ENCODE measurements at regions of chr2 and their contacts with region 1.

Region 1: DNA sequence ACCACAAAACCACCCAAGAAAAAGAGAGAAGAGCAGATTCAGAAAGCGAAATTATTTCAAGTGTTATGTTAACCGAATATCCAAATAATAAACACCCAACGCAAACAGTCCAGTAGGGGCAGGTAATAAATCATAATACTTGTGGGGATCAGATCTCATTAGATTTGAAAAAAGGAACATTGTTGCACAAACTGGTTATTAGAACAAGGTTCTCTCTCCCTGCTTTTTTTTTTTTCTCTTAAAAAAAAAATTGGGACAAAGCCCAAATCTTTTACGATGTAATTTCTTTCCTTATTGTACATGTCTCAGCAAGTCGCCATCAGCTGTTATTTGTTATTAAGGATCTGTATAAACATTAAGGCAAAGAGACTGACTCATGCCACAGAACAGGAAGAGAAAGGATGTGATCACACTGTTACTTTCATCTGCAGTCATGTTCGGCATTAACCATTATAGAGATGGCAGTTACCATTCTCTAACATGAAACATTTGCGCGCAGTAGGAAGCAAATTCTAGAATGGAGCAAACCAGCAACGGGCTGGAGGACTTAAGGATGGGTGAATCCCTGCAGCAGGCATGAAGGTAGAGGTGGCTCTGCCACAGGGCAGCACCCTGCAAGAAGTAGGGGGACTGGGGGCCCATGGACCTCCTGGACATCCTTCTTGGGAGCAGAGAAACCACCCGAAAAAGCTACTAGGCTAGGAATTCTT is 42.0 kb downstream of the EPHA4 start:
- DNase-seq: peak in 4 of 5 donors; percentile 26 to 40 (median 36)
- H3K4me3 ChIP-seq: peak overlapping the region; percentile 9 to 38
- H3K4me3 Mint-ChIP-seq: peak overlapping the region; percentile 66 to 83 (median 78)
- H3K27ac ChIP-seq: peak overlapping the region; percentile 33
- H3K27ac Mint-ChIP-seq: peak overlapping the region; percentile 84 to 96 (median 91)
- H3K4me1 ChIP-seq: peaks cover 69% of the 10 kb centered on the region
- H3K4me1 Mint-ChIP-seq: peaks cover 54 to 76% (median 68%) of the 10 kb centered on the region in 4 donors
- H3K27me3 ChIP-seq: no peaks in the 10 kb centered on the region
- H3K27me3 Mint-ChIP-seq: no peaks in the 10 kb centered on the region

Region 2: GRCh38 chr2:221502270-221503010 is 27.7 kb before region 1 on chr2:
- CTCF ChIA-PET with region 1: interaction called, 10 read pairs
- POLR2A ChIA-PET with region 1: interaction called, 6 read pairs
- intact Hi-C with region 1: no loop called
- DNase-seq: no peak
- H3K4me3 ChIP-seq: no peak overlapping the region
- H3K4me3 Mint-ChIP-seq: peak overlapping the region in 1 of 8 donors; percentile 37
- H3K27ac ChIP-seq: no peak overlapping the region
- H3K27ac Mint-ChIP-seq: peak overlapping the region in 5 of 7 donors; percentile 1 to 39 (median 13)
- H3K4me1 ChIP-seq: peaks cover 22% of the 10 kb centered on the region
- H3K4me1 Mint-ChIP-seq: peaks cover 28 to 59% (median 45%) of the 10 kb centered on the region in 4 donors
- H3K27me3 ChIP-seq: no peaks in the 10 kb centered on the region
- H3K27me3 Mint-ChIP-seq: no peaks in the 10 kb centered on the region

Region 3: DNA sequence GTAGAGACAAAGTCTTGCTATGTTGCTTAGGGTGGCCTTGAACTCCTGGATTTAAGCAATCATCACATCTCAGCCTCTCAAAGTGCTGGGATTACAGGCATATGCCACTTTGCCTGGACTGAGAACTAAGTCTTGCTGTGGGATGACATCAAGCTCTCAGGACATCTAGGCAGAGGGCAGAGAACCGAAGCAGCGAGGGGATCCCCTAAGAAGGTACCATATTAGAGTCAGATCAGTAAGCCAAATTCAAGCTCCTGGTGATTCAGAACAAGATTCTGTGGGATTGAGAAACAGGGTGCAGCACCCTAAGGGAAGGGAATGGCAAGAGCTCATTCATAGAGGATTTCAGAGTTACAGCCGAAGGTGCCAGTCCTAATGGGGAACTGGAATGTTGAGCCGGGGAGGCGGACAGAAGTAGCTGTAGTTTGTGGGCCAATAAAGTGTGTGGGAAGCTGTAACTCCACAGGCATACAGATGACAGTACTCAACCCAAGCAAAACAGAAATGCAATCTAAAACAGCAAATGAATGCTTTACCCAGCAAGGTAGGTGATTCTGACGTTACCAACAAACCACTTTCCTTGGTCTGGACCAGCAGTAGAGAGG is 11.1 kb after region 1 on chr2:
- CTCF ChIA-PET with region 1: no interaction called
- POLR2A ChIA-PET with region 1: interaction called, 12 read pairs
- intact Hi-C with region 1: loop called (anchors 2 kb)
- DNase-seq: no peak
- H3K4me3 ChIP-seq: no peak overlapping the region
- H3K4me3 Mint-ChIP-seq: no peak overlapping the region
- H3K27ac ChIP-seq: no peak overlapping the region
- H3K27ac Mint-ChIP-seq: peak overlapping the region in 3 of 7 donors; percentile 44 to 82 (median 45)
- H3K4me1 ChIP-seq: no peaks in the 10 kb centered on the region
- H3K4me1 Mint-ChIP-seq: peaks cover 16 to 44% (median 36%) of the 10 kb centered on the region in 4 donors
- H3K27me3 ChIP-seq: no peaks in the 10 kb centered on the region
- H3K27me3 Mint-ChIP-seq: no peaks in the 10 kb centered on the region

Region 4: DNA sequence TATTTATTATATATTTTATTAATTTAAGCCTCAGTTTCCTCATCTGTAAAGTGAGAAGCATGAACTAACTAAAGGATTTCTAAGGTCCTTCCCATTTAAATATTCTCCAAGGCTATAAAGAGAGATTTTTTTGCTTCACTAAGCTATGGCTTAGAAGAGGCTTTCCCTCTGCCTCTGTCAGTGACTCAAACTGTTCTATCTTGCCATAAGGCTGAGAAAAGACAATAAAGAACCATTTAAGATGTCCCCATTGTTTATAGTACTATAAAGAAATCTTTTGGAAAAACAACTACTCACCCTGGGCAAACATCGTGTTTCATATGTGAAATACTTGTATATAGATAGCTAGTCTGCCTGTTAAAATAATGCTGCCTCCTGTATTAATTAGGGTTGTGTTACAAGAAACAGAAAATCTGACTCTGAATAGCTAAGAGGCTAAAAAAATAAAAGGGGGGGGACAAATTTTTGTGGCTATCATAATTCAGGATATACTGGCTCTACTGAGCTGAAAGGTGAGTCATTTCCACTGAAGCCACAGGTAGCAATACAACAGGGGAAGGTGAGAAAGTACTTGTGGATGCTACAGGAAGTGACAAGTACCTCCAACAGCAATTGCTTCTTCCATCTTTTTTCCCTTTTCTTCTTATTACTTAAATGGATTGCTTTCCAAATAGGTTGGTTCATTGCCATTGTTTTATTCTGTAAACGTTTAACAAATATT is 16.6 kb after region 1 on chr2:
- CTCF ChIA-PET with region 1: no interaction called
- POLR2A ChIA-PET with region 1: interaction called, 7 read pairs
- intact Hi-C with region 1: loop called (anchors 2 kb)
- DNase-seq: no peak
- H3K4me3 ChIP-seq: no peak overlapping the region
- H3K4me3 Mint-ChIP-seq: peak overlapping the region in 1 of 8 donors; percentile 7
- H3K27ac ChIP-seq: no peak overlapping the region
- H3K27ac Mint-ChIP-seq: peak overlapping the region in 4 of 7 donors; percentile 12 to 57 (median 28)
- H3K4me1 ChIP-seq: peaks cover 18% of the 10 kb centered on the region
- H3K4me1 Mint-ChIP-seq: peaks cover 29 to 40% (median 35%) of the 10 kb centered on the region in 4 donors
- H3K27me3 ChIP-seq: no peaks in the 10 kb centered on the region
- H3K27me3 Mint-ChIP-seq: no peaks in the 10 kb centered on the region

Region 5: GRCh38 chr2:221649051-221649775 is 119.1 kb after region 1 on chr2:
- CTCF ChIA-PET with region 1: no interaction called
- POLR2A ChIA-PET with region 1: no interaction called
- intact Hi-C with region 1: no loop called
- DNase-seq: no peak
- H3K4me3 ChIP-seq: no peak overlapping the region
- H3K4me3 Mint-ChIP-seq: no peak overlapping the region
- H3K27ac ChIP-seq: no peak overlapping the region
- H3K27ac Mint-ChIP-seq: no peak overlapping the region
- H3K4me1 ChIP-seq: no peaks in the 10 kb centered on the region
- H3K4me1 Mint-ChIP-seq: no peaks in the 10 kb centered on the region
- H3K27me3 ChIP-seq: no peaks in the 10 kb centered on the region
- H3K27me3 Mint-ChIP-seq: peaks cover 0 to 2% of the 10 kb centered on the region in 2 donors

Measured in CD4-positive, alpha-beta memory T cell (primary cell).